CD4-positive, alpha-beta memory T cell (primary cell): ENCODE measurements at regions of chr14 and their contacts with region 1.

Region 1: GRCh38 chr14:101823511-101824120 is 62.1 kb downstream of the PPP2R5C start:
- DNase-seq: peak; percentile 83 to 95 (median 88)
- H3K4me3 ChIP-seq: peak overlapping the region; percentile 78 to 85
- H3K4me3 Mint-ChIP-seq: peak overlapping the region; percentile 90 to 99 (median 95)
- H3K27ac ChIP-seq: peak overlapping the region; percentile 98
- H3K27ac Mint-ChIP-seq: peak overlapping the region; percentile 97 to 100 (median 100)
- H3K4me1 ChIP-seq: peaks cover 84% of the 10 kb centered on the region
- H3K4me1 Mint-ChIP-seq: peaks cover 59 to 88% (median 69%) of the 10 kb centered on the region in 4 donors
- H3K27me3 ChIP-seq: no peaks in the 10 kb centered on the region
- H3K27me3 Mint-ChIP-seq: no peaks in the 10 kb centered on the region

Region 2: GRCh38 chr14:101761032-101761880 is 62.4 kb before region 1 on chr14 and contains the start of gene PPP2R5C:
- CTCF ChIA-PET with region 1: interaction called, 11 read pairs
- POLR2A ChIA-PET with region 1: interaction called, 21 read pairs
- intact Hi-C with region 1: loop called (anchors 1 kb)
- DNase-seq: peak; percentile 86 to 90 (median 87)
- H3K4me3 ChIP-seq: peak within 1 kb of the TSS; percentile 49 to 94
- H3K4me3 Mint-ChIP-seq: peak within 1 kb of the TSS; percentile 92 to 96 (median 94)
- H3K27ac ChIP-seq: peak within 1 kb of the TSS; percentile 82
- H3K27ac Mint-ChIP-seq: peak within 1 kb of the TSS; percentile 92 to 96 (median 95)
- H3K4me1 ChIP-seq: peaks cover 44% of the 10 kb centered on the region
- H3K4me1 Mint-ChIP-seq: peaks cover 32 to 45% (median 39%) of the 10 kb centered on the region in 4 donors
- H3K27me3 ChIP-seq: no peaks in the 10 kb centered on the region
- H3K27me3 Mint-ChIP-seq: no peaks in the 10 kb centered on the region
- total RNA-seq, gene PPP2R5C: 584 to 620 TPM

Region 3: GRCh38 chr14:101781240-101782061 is 42.2 kb before region 1 on chr14:
- CTCF ChIA-PET with region 1: interaction called, 4 read pairs
- POLR2A ChIA-PET with region 1: interaction called, 107 read pairs
- intact Hi-C with region 1: loop called (anchors 2 kb)
- DNase-seq: peak in 4 of 5 donors; percentile 26 to 41 (median 34)
- H3K4me3 ChIP-seq: peak overlapping the region; percentile 11 to 45
- H3K4me3 Mint-ChIP-seq: peak overlapping the region; percentile 67 to 86 (median 74)
- H3K27ac ChIP-seq: peak overlapping the region; percentile 8
- H3K27ac Mint-ChIP-seq: peak overlapping the region in 4 of 7 donors; percentile 25 to 83 (median 38)
- H3K4me1 ChIP-seq: peaks cover 8% of the 10 kb centered on the region
- H3K4me1 Mint-ChIP-seq: peaks cover 12 to 26% (median 21%) of the 10 kb centered on the region in 4 donors
- H3K27me3 ChIP-seq: no peaks in the 10 kb centered on the region
- H3K27me3 Mint-ChIP-seq: no peaks in the 10 kb centered on the region

Region 4: DNA sequence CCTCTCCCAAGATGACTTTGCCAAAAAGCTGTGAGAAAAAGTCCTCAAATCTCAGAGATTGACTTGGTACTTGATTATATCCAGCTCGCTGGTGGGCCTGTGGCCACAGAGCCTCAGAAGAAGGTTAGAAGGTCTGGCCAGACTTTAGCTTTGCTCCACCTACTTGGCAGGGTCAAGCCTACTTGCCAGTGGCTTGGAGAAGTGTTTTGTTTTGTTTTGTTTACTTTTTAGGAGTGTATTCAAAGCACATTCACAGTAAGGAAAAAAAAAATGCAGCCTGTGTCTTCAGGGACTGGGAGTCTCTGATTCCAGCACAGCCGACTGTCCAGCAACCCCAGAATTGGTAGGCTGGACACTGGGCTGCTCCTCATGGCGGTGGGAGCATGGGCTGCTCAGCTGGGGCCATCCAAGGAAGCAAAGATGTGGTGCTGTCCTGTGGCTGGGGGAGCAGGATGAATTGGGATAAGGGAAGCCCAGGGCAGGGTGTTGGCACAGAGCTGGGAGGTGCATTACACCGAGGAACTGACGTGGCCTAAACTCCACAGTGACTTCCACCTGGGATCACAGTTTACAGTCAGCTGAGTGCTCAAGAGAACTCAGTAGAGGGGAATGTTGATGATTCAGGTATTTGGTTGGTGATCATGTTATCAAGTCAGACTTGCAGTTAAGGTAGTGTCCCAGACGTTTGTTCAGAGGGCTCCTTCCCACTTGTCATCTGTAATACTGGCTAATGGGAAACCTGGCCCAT is 11.4 kb after region 1 on chr14:
- CTCF ChIA-PET with region 1: interaction called, 5 read pairs
- POLR2A ChIA-PET with region 1: interaction called, 1,038 read pairs
- intact Hi-C with region 1: no loop called
- DNase-seq: no peak
- H3K4me3 ChIP-seq: no peak overlapping the region
- H3K4me3 Mint-ChIP-seq: peak overlapping the region in 5 of 8 donors; percentile 15 to 62 (median 35)
- H3K27ac ChIP-seq: peak overlapping the region; percentile 31
- H3K27ac Mint-ChIP-seq: peak overlapping the region; percentile 65 to 97 (median 83)
- H3K4me1 ChIP-seq: peaks cover 100% of the 10 kb centered on the region
- H3K4me1 Mint-ChIP-seq: peaks cover 61 to 99% (median 82%) of the 10 kb centered on the region in 4 donors
- H3K27me3 ChIP-seq: no peaks in the 10 kb centered on the region
- H3K27me3 Mint-ChIP-seq: no peaks in the 10 kb centered on the region

Region 5: DNA sequence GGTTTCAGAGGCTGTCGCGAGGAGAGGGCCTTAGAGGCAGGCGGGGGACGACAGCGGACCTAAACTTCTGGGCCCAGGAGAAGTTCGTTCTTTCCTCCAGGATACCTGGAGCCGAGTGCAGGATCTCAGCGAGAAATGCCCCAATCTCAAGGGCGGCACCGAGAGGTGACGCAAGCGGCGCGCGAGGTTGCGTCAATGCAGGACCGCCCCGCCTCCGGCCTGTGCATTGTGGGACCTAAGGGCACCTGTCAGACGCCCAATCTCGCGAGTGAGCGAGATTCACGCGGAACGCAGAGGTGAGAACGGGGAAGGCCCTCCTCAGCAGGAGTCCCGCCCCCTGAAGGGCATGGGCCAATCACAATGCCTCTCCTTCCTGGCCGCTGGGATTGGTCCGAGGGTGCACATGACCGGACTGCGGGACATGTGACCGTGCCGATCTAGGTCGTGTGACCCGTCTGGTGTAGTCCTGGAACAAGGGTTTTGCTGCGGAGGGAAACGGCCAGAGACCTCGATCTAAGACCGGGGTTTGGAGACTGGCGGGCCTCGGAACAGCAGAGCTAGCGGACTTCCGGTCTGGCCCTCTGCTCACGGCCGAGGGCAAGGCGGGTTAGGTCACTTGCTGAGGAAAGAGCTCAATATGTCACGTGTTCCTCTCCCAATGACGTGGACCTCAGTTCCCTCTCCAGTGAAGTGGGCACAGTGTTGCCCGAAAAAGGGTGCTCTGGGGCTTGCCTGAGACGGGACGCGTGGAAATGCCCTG is 124.5 kb after region 1 on chr14:
- CTCF ChIA-PET with region 1: no interaction called
- POLR2A ChIA-PET with region 1: interaction called, 15 read pairs
- intact Hi-C with region 1: loop called (anchors 1 kb)
- DNase-seq: peak; percentile 99 to 100 (median 100)
- H3K4me3 ChIP-seq: peak overlapping the region; percentile 87 to 98
- H3K4me3 Mint-ChIP-seq: peak overlapping the region; percentile 92 to 99 (median 96)
- H3K27ac ChIP-seq: peak overlapping the region; percentile 94
- H3K27ac Mint-ChIP-seq: peak overlapping the region; percentile 99 to 100 (median 100)
- H3K4me1 ChIP-seq: peaks cover 13% of the 10 kb centered on the region
- H3K4me1 Mint-ChIP-seq: peaks cover 6 to 31% (median 21%) of the 10 kb centered on the region in 4 donors
- H3K27me3 ChIP-seq: peaks cover 5% of the 10 kb centered on the region
- H3K27me3 Mint-ChIP-seq: peaks cover 9 to 16% of the 10 kb centered on the region in 2 donors